ENCODE measurements at regions of chr3 and their contacts with region 1.

Region 1: GRCh38 chr3:124761250-124761796 is 31.1 kb downstream of the UMPS start:
- DNase-seq: peak; percentile 66
- ATAC-seq: peak; percentile 59
- H3K4me3 ChIP-seq: peak overlapping the region in 1 of 3 experiments; percentile 27; a peak in 1 of 6 replicates
- H3K27ac ChIP-seq: no peak overlapping the region
- H3K4me1 ChIP-seq: peaks cover 23% of the 10 kb centered on the region
- H3K27me3 ChIP-seq: no peaks in the 10 kb centered on the region
- CTCF ChIP-seq: peak; percentile 96
- EP300 ChIP-seq: no peak
- POLR2A ChIP-seq: no peak
- RAD21 ChIP-seq: peak; percentile 81

Region 2: GRCh38 chr3:124780761-124781475 is 19.6 kb after region 1 on chr3:
- CTCF ChIA-PET with region 1: no interaction called
- POLR2A ChIA-PET with region 1: no interaction called
- in situ Hi-C with region 1: no loop called
- intact Hi-C with region 1: no loop called
- DNase-seq: no peak
- ATAC-seq: no peak
- H3K4me3 ChIP-seq: no peak overlapping the region
- H3K27ac ChIP-seq: peak overlapping the region; percentile 6
- H3K4me1 ChIP-seq: peaks cover 8% of the 10 kb centered on the region; the same call in 1 of the 2 replicates
- H3K27me3 ChIP-seq: no peaks in the 10 kb centered on the region
- CTCF ChIP-seq: no peak
- EP300 ChIP-seq: no peak
- POLR2A ChIP-seq: no peak
- RAD21 ChIP-seq: no peak

Region 3: GRCh38 chr3:124887177-124887931 is 126.0 kb after region 1 on chr3 and contains the start of gene ITGB5:
- CTCF ChIA-PET with region 1: no interaction called
- POLR2A ChIA-PET with region 1: interaction called, 11 read pairs
- in situ Hi-C with region 1: no loop called
- intact Hi-C with region 1: loop called (anchors 5 kb)
- DNase-seq: peak; percentile 61
- ATAC-seq: peak; percentile 81
- H3K4me3 ChIP-seq: peak within 1 kb of the TSS; percentile 82 to 85 (median 85)
- H3K27ac ChIP-seq: peak within 1 kb of the TSS; percentile 90
- H3K4me1 ChIP-seq: peaks cover 61% of the 10 kb centered on the region
- H3K27me3 ChIP-seq: no peaks in the 10 kb centered on the region
- CTCF ChIP-seq: no peak; the same call in 1 of the 2 replicates
- EP300 ChIP-seq: no peak
- POLR2A ChIP-seq: peak in 1 of 2 experiments; percentile 69; a peak in 2 of 4 replicates
- RAD21 ChIP-seq: peak; percentile 63
- total RNA-seq, gene ITGB5: 50.2 and 74.1 TPM in 2 replicates

Region 4: DNA sequence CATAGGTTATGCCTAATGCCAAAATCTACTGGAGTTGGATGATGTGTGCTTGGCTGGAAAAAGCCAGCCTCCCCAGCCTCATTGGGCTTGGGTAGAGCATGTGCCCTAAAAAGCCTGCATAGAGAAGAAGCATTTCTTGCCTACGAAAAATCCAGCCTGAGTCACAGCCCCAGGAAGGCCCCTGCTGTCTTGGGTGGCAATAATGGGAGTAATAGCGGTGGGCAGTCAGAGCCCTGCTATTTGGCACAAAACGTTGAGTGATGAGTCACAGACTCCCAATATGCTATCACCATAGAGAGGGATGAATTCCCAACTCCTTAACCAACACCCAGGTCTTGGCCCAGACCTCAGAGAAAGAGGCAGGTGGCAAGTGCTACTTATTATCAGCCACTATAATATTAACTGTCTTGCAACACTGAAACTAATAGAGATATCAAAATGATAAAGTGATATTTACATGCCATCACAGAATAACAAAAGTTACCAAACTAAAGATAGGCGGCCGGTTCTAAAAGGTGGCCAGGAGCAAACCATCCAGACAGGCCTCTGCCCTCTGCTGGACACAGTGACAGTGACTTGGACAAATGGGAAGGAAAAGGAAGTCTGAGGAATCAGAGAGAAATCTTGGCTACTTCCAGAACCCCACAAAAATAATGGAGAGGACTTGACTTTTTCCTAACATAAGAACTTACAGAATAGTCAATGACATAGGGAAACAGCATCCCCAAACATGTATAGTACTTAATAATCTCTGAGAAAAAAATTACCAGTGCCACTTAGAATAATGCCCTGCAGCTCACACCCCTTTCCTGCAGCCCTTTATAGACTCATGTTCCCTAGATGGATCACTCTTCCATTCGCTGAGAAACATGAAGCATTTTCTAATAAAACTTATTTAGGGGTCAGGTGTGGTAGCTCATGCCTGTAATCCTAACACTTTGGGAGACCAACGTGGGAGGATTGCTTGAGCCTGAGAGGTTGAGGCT is 225.1 kb after region 1 on chr3:
- CTCF ChIA-PET with region 1: interaction called, 3 read pairs
- POLR2A ChIA-PET with region 1: no interaction called
- in situ Hi-C with region 1: no loop called
- intact Hi-C with region 1: loop called (anchors 2 kb)
- DNase-seq: no peak
- ATAC-seq: peak; percentile 68
- H3K4me3 ChIP-seq: no peak overlapping the region
- H3K27ac ChIP-seq: no peak overlapping the region
- H3K4me1 ChIP-seq: peaks cover under 1% of the 10 kb centered on the region; the same call in 1 of the 2 replicates
- H3K27me3 ChIP-seq: no peaks in the 10 kb centered on the region
- CTCF ChIP-seq: peak; percentile 53
- EP300 ChIP-seq: no peak
- POLR2A ChIP-seq: no peak
- RAD21 ChIP-seq: peak; percentile 24; the same call in 1 of the 2 replicates

Region 5: DNA sequence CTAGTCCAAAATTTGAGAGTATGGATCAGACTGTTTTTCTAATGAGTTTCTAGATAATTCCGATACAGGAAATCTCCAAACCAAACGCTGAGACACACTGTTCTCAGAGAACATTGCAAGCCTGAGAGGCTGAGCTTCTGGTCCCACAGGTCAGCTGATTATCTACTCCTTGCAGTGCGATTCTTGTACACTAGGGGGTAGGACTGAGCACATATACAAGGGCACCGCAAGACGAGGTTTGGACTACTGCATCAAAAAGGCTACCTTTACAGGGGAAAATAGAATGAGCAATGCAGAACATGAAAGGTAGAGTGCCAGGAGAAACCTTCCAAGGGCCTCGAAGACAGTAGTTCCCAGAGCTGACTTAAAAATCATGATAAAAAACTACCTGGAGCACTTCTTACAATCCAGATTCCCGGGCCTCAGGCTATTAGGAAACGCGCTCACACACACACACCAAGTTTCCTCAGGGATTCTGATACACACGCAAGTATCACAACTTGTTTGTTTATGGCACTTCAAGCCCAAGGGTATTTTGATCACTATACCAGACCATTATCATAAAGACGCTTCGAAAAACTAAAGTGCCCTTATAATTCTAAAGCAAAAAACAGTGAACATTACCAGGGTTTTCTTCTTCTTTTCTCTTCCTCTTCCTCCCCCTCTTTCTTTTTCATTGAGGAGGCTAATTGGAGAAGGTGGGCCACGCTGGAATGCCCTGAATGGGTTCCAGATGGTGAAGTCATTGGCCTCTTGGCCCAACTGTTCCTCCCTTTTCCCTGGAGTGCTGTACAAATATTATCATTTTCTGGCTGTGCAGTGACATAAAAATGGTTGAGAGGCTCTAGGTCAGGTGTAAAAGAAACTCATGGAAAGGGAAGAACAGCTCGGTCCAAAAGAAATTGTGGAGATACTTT is 389.5 kb after region 1 on chr3:
- CTCF ChIA-PET with region 1: no interaction called
- POLR2A ChIA-PET with region 1: no interaction called
- in situ Hi-C with region 1: loop called (anchors 25 kb)
- intact Hi-C with region 1: no loop called
- DNase-seq: peak; percentile 53
- ATAC-seq: peak; percentile 75
- H3K4me3 ChIP-seq: no peak overlapping the region
- H3K27ac ChIP-seq: no peak overlapping the region
- H3K4me1 ChIP-seq: peaks cover 21% of the 10 kb centered on the region
- H3K27me3 ChIP-seq: peaks cover 0 to 14% of the 10 kb centered on the region in 2 experiments; a peak in 2 of 5 replicates
- CTCF ChIP-seq: peak; percentile 74
- EP300 ChIP-seq: no peak
- POLR2A ChIP-seq: no peak
- RAD21 ChIP-seq: 0 out of 2 replicates have a peak, but pooled peaks have one; percentile 26

Measured in HepG2 (cell line).